ENCODE measurements at regions of chr19 and their contacts with region 1.

Region 1: DNA sequence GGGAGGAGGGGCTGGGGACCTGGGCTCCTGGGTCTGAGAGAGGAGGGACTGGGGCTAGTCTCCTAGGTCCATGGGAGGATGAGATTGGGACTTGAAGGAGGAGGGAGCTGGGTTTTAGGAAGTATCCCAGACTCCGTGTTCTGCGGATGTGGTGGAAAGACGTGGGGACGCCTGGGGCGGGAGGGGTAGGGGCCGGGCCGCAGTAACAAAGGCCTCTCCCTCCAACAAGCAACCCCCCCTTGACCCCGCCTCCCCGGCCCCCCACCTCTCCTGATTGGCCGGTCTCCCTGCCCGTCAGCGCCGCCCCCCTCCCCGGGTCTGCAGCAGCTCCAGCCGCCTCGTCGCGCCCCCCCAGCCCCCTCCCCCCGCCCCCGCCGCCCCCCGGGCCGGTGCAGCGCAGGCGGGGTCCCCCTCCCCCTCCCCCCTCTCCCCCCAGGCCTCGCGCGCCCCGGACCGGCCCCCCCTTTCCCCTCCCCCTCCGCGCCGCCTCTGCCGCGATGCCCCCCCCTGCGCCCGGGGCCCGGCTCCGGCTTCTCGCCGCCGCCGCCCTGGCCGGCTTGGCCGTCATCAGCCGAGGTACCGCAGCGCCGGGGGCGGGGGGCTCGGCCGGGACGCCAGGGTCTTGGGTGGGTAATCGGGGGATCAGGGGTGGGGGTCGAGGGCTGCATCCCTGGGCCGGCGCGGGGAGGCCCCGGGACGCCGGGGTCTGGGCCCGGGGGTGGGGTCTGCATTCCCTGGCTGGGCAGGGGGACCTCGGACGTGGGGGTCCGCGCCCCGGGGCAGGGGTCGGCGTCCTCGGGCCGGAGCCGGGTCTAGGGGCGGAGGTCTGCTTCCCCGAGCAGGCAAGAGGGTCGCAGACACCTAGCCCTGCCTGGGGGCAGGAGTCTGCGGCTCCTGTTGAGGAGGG is at the start of gene IGLON5:
- DNase-seq: peak; percentile 16
- H3K4me3 ChIP-seq: peak within 1 kb of the TSS; percentile 15
- H3K27ac ChIP-seq: no peak within 1 kb of the TSS
- H3K4me1 ChIP-seq: no peaks in the 10 kb centered on the region
- H3K27me3 ChIP-seq: peaks cover 5% of the 10 kb centered on the region
- CTCF ChIP-seq: no peak
- total RNA-seq, gene IGLON5: 0.39 and 0.94 TPM in 2 replicates

Region 2: GRCh38 chr19:51272183-51272810 is 39.3 kb before region 1 on chr19:
- CTCF ChIA-PET with region 1: no interaction called
- POLR2A ChIA-PET with region 1: interaction called, 18 read pairs
- intact Hi-C with region 1: no loop called
- DNase-seq: peak; percentile 4
- H3K4me3 ChIP-seq: no peak overlapping the region
- H3K27ac ChIP-seq: no peak overlapping the region
- H3K4me1 ChIP-seq: no peaks in the 10 kb centered on the region
- H3K27me3 ChIP-seq: no peaks in the 10 kb centered on the region
- CTCF ChIP-seq: no peak

Measured in A673 (cell line).